Transverse colon (tissue), 4 donors: ENCODE measurements at regions of chr2 and their contacts with region 1.

Region 1: DNA sequence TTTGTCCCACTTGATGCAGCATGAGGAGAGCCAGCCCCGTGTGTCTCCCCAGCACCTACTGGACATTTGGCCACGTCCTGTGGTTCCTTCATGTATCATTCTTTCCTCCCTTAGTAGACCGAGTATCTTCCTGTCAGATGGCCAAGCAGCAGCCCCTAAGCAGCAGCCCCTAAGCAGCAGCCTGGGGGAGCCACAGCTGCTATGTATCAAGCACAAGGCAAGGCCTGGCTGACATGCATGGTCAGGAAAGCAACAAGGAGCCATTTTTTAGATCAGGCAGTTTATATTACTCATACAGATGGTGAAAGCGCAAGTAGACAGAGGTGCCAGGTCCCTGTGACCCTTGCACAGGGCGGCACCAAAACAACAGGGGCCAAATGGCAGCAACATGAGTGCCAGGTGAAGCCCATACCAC is 22.1 kb downstream of the CHCHD5 start:
- DNase-seq: peak; percentile 72
- H3K4me3 ChIP-seq: no peak overlapping the region
- H3K27ac ChIP-seq: peak overlapping the region; percentile 30 to 53 (median 32)
- H3K4me1 ChIP-seq: peaks cover 0 to 7% (median 4%) of the 10 kb centered on the region in 4 donors
- H3K27me3 ChIP-seq: no peaks in the 10 kb centered on the region
- CTCF ChIP-seq: no peak
- EP300 ChIP-seq: no peak
- POLR2A ChIP-seq: no peak

Region 2: GRCh38 chr2:112493858-112494648 is 112.4 kb before region 1 on chr2:
- in situ Hi-C with region 1: no loop called
- intact Hi-C with region 1: no loop called
- DNase-seq: peak; percentile 11
- H3K4me3 ChIP-seq: no peak overlapping the region
- H3K27ac ChIP-seq: no peak overlapping the region
- H3K4me1 ChIP-seq: peaks cover 0 to 7% (median 0%) of the 10 kb centered on the region in 4 donors
- H3K27me3 ChIP-seq: no peaks in the 10 kb centered on the region
- CTCF ChIP-seq: no peak
- EP300 ChIP-seq: no peak
- POLR2A ChIP-seq: no peak

Region 3: GRCh38 chr2:112706170-112706664 is 99.7 kb after region 1 on chr2:
- in situ Hi-C with region 1: no loop called
- intact Hi-C with region 1: no loop called
- DNase-seq: no peak
- H3K4me3 ChIP-seq: no peak overlapping the region
- H3K27ac ChIP-seq: no peak overlapping the region
- H3K4me1 ChIP-seq: peaks cover 0 to 4% (median 0%) of the 10 kb centered on the region in 4 donors
- H3K27me3 ChIP-seq: peaks cover 4% of the 10 kb centered on the region
- CTCF ChIP-seq: no peak
- EP300 ChIP-seq: no peak
- POLR2A ChIP-seq: no peak

Region 4: DNA sequence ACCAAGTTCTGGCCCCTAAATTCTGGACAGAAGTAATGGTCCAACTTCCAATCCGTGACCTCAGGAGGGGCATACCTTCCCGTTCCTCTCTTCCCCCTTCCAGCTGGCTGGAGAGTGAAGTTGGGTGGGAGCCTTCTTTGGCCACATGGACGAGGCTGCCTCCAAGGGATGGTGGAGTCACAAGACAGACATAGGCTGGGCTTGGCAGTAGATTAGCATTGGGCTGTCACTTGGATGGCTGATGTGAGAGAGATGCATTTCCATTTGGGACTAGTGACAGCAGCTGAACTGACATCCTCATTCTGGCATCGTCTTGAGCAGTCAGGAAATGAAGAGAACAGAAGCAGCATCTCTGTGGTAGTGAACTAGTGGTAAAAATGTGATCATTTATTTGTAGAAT is 127.0 kb after region 1 on chr2:
- in situ Hi-C with region 1: loop called in 2 of 4 experiments (anchors 10 to 25 kb)
- intact Hi-C with region 1: no loop called
- DNase-seq: no peak
- H3K4me3 ChIP-seq: no peak overlapping the region
- H3K27ac ChIP-seq: no peak overlapping the region
- H3K4me1 ChIP-seq: peaks cover 0 to 19% (median 9%) of the 10 kb centered on the region in 4 donors
- H3K27me3 ChIP-seq: no peaks in the 10 kb centered on the region
- CTCF ChIP-seq: no peak
- EP300 ChIP-seq: no peak
- POLR2A ChIP-seq: no peak